ENCODE measurements at regions of chr1 and their contacts with region 1.

Region 1: GRCh38 chr1:154335025-154335714 is 9.8 kb downstream of the ATP8B2 start:
- DNase-seq: no peak
- ATAC-seq: peak; percentile 99
- H3K4me3 ChIP-seq: no peak overlapping the region
- H3K27ac ChIP-seq: no peak overlapping the region
- H3K4me1 ChIP-seq: no peaks in the 10 kb centered on the region
- H3K27me3 ChIP-seq: no peaks in the 10 kb centered on the region
- CTCF ChIP-seq: peak; percentile 75 to 88 (median 84)
- EP300 ChIP-seq: no peak
- POLR2A ChIP-seq: no peak
- RAD21 ChIP-seq: peak; percentile 77

Region 2: GRCh38 chr1:154198756-154199562 is 136.2 kb before region 1 on chr1:
- CTCF ChIA-PET with region 1: interaction called, 44 read pairs
- POLR2A ChIA-PET with region 1: no interaction called
- RAD21 ChIA-PET with region 1: interaction called, 30 read pairs
- SMC1A ChIA-PET with region 1: interaction called, 25 read pairs
- in situ Hi-C with region 1: no loop called
- intact Hi-C with region 1: loop called (anchors 1 kb)
- DNase-seq: no peak
- ATAC-seq: peak; percentile 87
- H3K4me3 ChIP-seq: no peak overlapping the region
- H3K27ac ChIP-seq: no peak overlapping the region
- H3K4me1 ChIP-seq: no peaks in the 10 kb centered on the region
- H3K27me3 ChIP-seq: no peaks in the 10 kb centered on the region; a peak in 1 of 4 replicates
- CTCF ChIP-seq: peak; percentile 61 to 71 (median 67)
- EP300 ChIP-seq: no peak
- POLR2A ChIP-seq: no peak
- RAD21 ChIP-seq: peak; percentile 76

Region 3: GRCh38 chr1:154318386-154318785 is 16.8 kb before region 1 on chr1:
- CTCF ChIA-PET with region 1: interaction called, 104 read pairs
- POLR2A ChIA-PET with region 1: no interaction called
- RAD21 ChIA-PET with region 1: interaction called, 5 read pairs
- SMC1A ChIA-PET with region 1: interaction called, 39 read pairs
- in situ Hi-C with region 1: no loop called
- intact Hi-C with region 1: no loop called
- DNase-seq: no peak
- ATAC-seq: no peak
- H3K4me3 ChIP-seq: no peak overlapping the region
- H3K27ac ChIP-seq: no peak overlapping the region
- H3K4me1 ChIP-seq: no peaks in the 10 kb centered on the region
- H3K27me3 ChIP-seq: peaks cover 0 to 3% of the 10 kb centered on the region in 2 experiments; a peak in 1 of 4 replicates
- CTCF ChIP-seq: no peak
- EP300 ChIP-seq: no peak
- POLR2A ChIP-seq: no peak
- RAD21 ChIP-seq: no peak

Region 4: GRCh38 chr1:154352581-154353459 is 17.6 kb after region 1 on chr1:
- CTCF ChIA-PET with region 1: interaction called, 37 read pairs
- POLR2A ChIA-PET with region 1: interaction called, 5 read pairs
- RAD21 ChIA-PET with region 1: interaction called, 4 read pairs
- SMC1A ChIA-PET with region 1: interaction called, 3 read pairs
- in situ Hi-C with region 1: no loop called
- intact Hi-C with region 1: no loop called
- DNase-seq: no peak
- ATAC-seq: peak; percentile 77
- H3K4me3 ChIP-seq: peak overlapping the region; percentile 18; the same call in 1 of the 2 replicates
- H3K27ac ChIP-seq: no peak overlapping the region
- H3K4me1 ChIP-seq: peaks cover 10% of the 10 kb centered on the region
- H3K27me3 ChIP-seq: peaks cover 0 to 5% of the 10 kb centered on the region in 2 experiments; a peak in 2 of 4 replicates
- CTCF ChIP-seq: peak in 1 of 3 experiments; percentile 48; a peak in 2 of 6 replicates
- EP300 ChIP-seq: no peak
- POLR2A ChIP-seq: no peak
- RAD21 ChIP-seq: peak; percentile 22; the same call in 1 of the 2 replicates

Region 5: GRCh38 chr1:154442006-154442740 is 107.0 kb after region 1 on chr1:
- CTCF ChIA-PET with region 1: interaction called, 14 read pairs
- POLR2A ChIA-PET with region 1: no interaction called
- RAD21 ChIA-PET with region 1: interaction called, 3 read pairs
- SMC1A ChIA-PET with region 1: interaction called, 4 read pairs
- in situ Hi-C with region 1: no loop called
- intact Hi-C with region 1: no loop called
- DNase-seq: no peak
- ATAC-seq: no peak
- H3K4me3 ChIP-seq: no peak overlapping the region
- H3K27ac ChIP-seq: no peak overlapping the region
- H3K4me1 ChIP-seq: peaks cover 43% of the 10 kb centered on the region
- H3K27me3 ChIP-seq: no peaks in the 10 kb centered on the region
- CTCF ChIP-seq: peak; percentile 31 to 57 (median 45)
- EP300 ChIP-seq: no peak
- POLR2A ChIP-seq: no peak
- RAD21 ChIP-seq: peak; percentile 29; the same call in 1 of the 2 replicates

Region 6: DNA sequence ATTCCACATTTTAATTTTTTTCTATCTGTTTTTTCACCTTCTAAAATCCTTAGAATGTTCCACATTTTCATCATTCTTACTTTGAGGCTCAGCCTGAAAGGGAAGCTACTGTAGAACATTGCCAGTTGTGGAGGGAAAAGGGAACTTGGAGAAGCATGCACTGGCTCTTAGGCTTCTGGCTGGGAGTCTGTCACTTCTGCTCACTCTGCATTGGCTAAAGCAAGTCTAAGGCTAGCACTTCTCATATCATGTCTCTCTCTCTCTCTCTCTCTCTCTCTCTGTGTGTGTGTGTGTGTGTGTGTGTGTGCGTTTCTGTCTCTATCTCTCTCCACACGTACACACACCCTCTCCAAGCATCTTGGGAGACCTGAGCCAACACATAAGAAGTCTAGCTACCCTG is 322.4 kb after region 1 on chr1:
- CTCF ChIA-PET with region 1: no interaction called
- POLR2A ChIA-PET with region 1: no interaction called
- RAD21 ChIA-PET with region 1: no interaction called
- SMC1A ChIA-PET with region 1: no interaction called
- in situ Hi-C with region 1: no loop called
- intact Hi-C with region 1: no loop called
- DNase-seq: no peak
- ATAC-seq: no peak
- H3K4me3 ChIP-seq: no peak overlapping the region
- H3K27ac ChIP-seq: no peak overlapping the region
- H3K4me1 ChIP-seq: no peaks in the 10 kb centered on the region
- H3K27me3 ChIP-seq: no peaks in the 10 kb centered on the region; a peak in 1 of 4 replicates
- CTCF ChIP-seq: no peak
- EP300 ChIP-seq: no peak
- POLR2A ChIP-seq: no peak
- RAD21 ChIP-seq: no peak